Ascending aorta (tissue), 2 donors: ENCODE measurements at regions of chr1 and their contacts with region 1.

Region 1: GRCh38 chr1:202235856-202236837 is 42.5 kb downstream of the LGR6 start:
- DNase-seq: peak; percentile 63 to 92
- H3K4me3 ChIP-seq: peak overlapping the region in 1 of 2 donors; percentile 3
- H3K27ac ChIP-seq: peak overlapping the region; percentile 93
- H3K4me1 ChIP-seq: peaks cover 18 to 40% of the 10 kb centered on the region in 2 donors
- H3K27me3 ChIP-seq: no peaks in the 10 kb centered on the region
- CTCF ChIP-seq: peak; percentile 89 to 94 (median 90)

Region 2: DNA sequence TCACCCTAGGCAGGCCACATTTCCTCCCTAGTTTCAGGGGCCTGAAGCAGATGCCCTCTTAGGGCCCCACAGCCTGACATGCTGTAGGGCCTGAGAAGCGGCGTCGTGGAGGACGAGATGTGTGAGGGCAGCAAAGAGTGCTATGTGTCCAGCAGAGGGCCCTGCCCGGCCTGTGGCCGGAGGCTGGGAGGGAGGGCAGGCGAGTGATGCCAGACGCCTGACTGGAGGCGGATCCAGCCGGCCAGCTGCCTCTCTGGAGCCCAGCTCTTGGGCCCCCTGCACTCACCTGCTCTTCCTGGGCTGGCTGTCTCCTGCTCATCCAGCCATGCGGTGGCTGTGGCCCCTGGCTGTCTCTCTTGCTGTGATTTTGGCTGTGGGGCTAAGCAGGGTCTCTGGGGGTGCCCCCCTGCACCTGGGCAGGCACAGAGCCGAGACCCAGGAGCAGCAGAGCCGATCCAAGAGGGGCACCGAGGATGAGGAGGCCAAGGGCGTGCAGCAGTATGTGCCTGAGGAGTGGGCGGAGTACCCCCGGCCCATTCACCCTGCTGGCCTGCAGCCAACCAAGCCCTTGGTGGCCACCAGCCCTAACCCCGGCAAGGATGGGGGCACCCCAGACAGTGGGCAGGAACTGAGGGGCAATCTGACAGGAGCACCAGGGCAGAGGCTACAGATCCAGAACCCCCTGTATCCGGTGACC is 113.4 kb before region 1 on chr1 and contains the start of gene GPR37L1:
- intact Hi-C with region 1: no loop called
- DNase-seq: peak in 1 of 2 donors; percentile 73
- H3K4me3 ChIP-seq: no peak within 1 kb of the TSS
- H3K27ac ChIP-seq: no peak within 1 kb of the TSS
- H3K4me1 ChIP-seq: no peaks in the 10 kb centered on the region
- H3K27me3 ChIP-seq: no peaks in the 10 kb centered on the region
- CTCF ChIP-seq: peak; percentile 35 to 64 (median 45)
- total RNA-seq, gene GPR37L1: not detected

Region 3: DNA sequence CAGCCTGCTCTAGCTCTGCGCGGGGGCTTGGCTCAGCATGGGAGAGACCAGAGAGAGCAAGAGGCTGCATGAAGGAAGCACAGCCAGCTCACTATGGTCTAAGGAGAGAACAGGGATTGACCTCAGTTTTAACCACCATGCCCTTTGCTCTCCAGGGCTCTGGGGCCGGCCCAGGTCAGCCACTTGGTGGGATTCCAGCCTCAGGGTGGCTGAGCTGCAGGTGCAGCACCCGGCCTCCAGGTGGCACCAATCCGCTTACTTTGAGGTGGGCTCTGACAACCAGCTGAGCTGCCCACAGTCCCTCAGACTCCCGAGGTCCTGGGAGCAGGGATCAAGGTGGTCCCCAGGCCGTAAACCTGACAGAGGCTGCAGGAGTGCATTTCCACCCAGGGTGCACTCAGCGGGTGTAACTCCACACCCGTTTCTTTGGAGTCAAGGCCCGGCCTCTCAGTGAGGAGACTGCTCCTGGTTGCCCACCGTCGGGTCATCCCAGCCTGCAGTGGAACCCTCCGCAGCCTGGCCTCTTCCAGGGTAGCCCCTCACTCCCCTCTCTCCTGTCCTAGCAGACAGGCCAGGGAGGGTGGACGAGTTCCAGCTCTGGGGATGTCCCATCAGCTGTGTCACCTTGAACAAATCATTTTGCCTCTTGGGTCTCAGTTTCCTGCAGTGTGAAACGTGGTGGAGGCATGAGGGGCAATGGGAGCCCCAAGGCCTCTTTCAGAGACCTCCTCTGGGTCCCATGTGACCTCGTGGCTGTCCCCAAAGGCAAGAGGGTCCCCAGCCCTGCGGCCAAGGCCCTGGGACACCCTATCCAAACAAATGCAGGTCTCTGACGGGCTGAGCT is 43.2 kb before region 1 on chr1:
- intact Hi-C with region 1: loop called (anchors 1 kb)
- DNase-seq: peak in 1 of 2 donors; percentile 89
- H3K4me3 ChIP-seq: peak overlapping the region; percentile 37 to 73
- H3K27ac ChIP-seq: peak overlapping the region; percentile 82 to 89
- H3K4me1 ChIP-seq: peaks cover 3 to 14% of the 10 kb centered on the region in 2 donors
- H3K27me3 ChIP-seq: no peaks in the 10 kb centered on the region
- CTCF ChIP-seq: peak; percentile 83 to 97 (median 95)

Region 4: DNA sequence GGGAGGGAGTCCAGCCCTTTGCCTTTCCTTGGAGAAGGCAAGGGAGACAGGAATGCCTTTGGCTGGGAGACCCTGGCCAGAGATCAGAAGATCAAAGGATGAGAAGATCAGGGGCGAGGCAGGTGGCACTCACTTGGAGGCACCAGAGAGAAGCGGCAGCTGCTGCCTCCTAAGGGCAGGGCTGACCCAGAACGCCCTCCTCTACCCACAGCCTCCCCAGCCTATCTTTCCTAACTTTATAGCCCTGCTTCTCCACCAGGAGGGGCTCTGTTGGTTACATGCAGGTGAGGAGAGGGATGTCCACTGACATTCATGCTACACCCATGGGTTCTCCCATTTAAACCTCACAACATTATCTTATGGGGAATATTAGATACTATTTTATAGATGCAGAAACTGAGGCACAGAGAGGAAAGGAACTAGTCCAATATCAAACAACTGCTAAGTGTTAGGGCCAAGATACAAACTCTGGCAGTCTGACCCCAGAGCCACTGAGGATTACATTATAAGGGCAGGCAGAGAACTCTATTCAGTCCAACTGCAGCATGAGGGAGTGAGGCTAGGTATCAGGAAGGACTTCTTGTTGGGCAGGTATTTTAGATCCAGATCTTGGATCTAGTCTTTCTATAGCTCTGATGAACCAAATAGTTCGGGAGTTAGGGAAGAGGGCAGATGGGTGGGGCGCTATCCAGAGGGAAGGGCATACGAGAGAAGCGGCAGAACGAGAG is 22.6 kb before region 1 on chr1:
- intact Hi-C with region 1: loop called (anchors 2 kb)
- DNase-seq: no peak
- H3K4me3 ChIP-seq: peak overlapping the region; percentile 52 to 70
- H3K27ac ChIP-seq: peak overlapping the region; percentile 60 to 74
- H3K4me1 ChIP-seq: peaks cover 9 to 54% of the 10 kb centered on the region in 2 donors
- H3K27me3 ChIP-seq: no peaks in the 10 kb centered on the region
- CTCF ChIP-seq: peak in 2 of 3 experiments; percentile 25 to 35

Region 5: DNA sequence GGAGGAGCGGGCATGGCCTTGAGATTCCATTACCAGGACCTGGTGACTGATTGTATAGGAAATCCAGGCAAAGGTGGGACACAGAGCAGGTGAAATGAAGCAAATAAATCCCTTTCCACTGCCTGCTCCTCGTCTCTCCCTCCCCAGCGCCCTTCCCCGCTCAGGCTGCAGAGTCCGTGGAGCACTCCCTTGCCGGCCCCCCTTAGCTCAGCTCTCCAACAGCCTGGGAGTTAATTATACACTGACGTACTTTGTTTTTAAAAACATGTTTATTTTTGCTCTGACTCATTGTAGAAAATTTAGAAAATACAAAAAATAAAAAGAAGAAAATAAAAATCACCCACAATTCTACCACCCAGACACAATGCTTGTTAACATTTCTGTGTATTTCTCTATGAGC is 19.2 kb after region 1 on chr1:
- intact Hi-C with region 1: loop called (anchors 2 kb)
- DNase-seq: peak in 1 of 2 donors; percentile 62
- H3K4me3 ChIP-seq: no peak overlapping the region
- H3K27ac ChIP-seq: peak overlapping the region; percentile 72 to 73
- H3K4me1 ChIP-seq: peaks cover 0 to 15% of the 10 kb centered on the region in 2 donors
- H3K27me3 ChIP-seq: no peaks in the 10 kb centered on the region
- CTCF ChIP-seq: no peak

Region 6: DNA sequence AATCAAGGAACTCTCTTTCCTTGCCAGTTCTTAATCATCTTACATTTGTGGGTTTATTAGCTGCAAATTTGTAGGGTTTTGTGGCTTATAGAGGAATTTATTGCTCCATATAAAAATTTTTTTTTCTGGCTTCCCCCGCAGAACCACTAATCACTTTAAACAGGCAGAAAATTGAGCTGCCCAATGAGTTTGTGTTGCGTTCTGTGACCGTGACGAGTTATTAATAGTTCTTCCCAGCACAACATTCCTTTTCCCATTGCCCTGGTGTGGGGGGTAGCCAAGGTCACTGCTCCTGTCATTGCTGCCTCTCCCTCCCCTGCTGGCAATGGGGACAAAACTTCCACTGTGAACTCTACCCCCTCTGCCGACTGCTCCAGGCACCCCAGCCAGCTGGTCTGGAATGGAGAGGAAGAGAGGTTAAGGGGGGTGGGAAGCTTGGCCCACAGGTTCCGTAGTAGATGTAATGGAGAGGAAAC is 50.5 kb after region 1 on chr1:
- intact Hi-C with region 1: loop called (anchors 2 kb)
- DNase-seq: peak in 1 of 2 donors; percentile 91
- H3K4me3 ChIP-seq: no peak overlapping the region
- H3K27ac ChIP-seq: peak overlapping the region; percentile 78 to 79
- H3K4me1 ChIP-seq: peaks cover 10 to 28% of the 10 kb centered on the region in 2 donors
- H3K27me3 ChIP-seq: no peaks in the 10 kb centered on the region
- CTCF ChIP-seq: peak; percentile 33 to 45 (median 38)

Region 7: GRCh38 chr1:202315576-202316168 is 79.5 kb after region 1 on chr1:
- intact Hi-C with region 1: loop called (anchors 1 kb)
- DNase-seq: peak in 1 of 2 donors; percentile 83
- H3K4me3 ChIP-seq: no peak overlapping the region
- H3K27ac ChIP-seq: no peak overlapping the region
- H3K4me1 ChIP-seq: peaks cover 0 to 9% of the 10 kb centered on the region in 2 donors
- H3K27me3 ChIP-seq: no peaks in the 10 kb centered on the region
- CTCF ChIP-seq: peak; percentile 73 to 89 (median 88)